ENCODE measurements at regions of chr1 and their contacts with region 1.

Region 1: DNA sequence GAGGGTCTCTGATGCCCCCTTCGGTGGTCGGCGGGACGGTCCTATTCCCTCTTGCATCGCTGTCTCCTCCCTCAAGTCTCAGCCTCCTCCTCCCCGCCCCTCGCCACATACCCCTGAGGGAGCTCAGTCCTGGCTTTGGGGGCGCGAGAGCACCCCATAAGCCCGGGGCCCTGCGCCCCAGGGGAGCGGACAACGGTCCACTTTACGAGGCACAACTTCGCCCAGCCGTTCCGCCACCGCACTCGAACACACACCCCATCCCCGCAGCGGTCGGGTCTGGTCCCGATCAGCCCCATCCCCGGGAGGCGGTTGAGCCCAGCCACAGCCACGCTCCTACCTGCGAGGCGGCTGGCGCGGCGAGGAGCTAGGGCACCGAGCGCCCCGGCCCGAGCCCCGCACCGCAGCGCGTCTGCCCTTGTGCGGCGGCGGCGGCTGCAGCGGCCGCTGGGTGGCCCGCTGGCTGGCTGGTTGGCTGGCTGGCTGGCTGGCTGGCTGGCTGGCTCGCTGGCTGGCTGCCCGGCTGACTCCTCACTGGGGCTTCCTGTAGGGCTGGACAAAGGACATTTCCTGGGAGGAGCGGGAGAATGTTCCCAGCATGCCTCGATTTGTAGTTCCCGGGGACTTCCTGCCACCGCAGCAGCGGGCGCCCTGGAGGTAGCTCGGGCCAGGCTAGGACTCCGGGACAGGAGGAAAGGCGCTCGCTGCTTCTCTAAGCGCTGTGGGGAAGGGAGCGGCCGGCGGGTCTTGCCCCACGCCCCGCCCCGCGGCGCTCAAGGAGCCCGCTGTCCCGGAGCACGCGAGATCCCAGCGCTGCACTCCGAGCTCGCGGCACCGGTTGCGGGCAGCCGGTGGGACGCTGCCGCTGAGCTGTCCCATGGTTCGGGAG is at the start of gene ZNF697:
- DNase-seq: peak; percentile 98
- total RNA-seq, gene ZNF697: 15.1 TPM

Region 2: DNA sequence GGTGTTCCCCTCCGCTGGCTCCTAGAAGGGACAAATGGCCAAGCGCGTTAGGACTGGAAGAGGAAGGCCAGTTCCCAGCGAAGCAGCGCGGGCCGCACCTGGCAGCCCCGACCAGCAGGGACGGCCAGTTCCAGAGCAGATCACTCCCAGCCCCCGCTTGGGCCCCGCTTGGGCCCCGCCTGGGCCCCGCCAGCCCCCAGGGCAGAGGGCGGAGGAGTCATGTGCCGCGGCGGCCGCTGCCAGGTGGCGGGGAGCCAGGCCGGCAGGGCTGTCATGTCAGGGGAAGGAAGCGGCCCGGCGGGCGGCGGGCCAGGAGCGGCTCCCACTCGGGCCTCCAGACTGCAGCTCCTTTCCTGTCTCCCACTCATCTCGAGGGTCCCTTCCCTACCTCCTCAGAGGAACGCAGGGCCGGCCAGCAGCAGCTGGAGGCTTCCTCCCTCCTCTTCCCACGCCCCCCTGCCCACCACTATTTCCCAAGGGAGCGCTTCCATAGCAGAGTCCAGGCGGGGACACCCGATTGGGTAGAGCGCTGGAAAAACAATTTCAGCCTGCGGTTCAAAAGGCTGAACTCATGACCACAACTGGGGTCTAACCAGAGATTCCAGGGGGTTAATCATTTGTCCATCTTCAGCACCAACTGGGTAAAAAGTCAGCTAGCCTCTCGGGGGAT is 16.4 kb before region 1 on chr1:
- intact Hi-C with region 1: loop called (anchors 1 kb)
- DNase-seq: peak; percentile 90

Measured in cardiac septum (tissue), 1 donor.